PC-9 (cell line): ENCODE measurements at regions of chr11 and their contacts with region 1.

Region 1: DNA sequence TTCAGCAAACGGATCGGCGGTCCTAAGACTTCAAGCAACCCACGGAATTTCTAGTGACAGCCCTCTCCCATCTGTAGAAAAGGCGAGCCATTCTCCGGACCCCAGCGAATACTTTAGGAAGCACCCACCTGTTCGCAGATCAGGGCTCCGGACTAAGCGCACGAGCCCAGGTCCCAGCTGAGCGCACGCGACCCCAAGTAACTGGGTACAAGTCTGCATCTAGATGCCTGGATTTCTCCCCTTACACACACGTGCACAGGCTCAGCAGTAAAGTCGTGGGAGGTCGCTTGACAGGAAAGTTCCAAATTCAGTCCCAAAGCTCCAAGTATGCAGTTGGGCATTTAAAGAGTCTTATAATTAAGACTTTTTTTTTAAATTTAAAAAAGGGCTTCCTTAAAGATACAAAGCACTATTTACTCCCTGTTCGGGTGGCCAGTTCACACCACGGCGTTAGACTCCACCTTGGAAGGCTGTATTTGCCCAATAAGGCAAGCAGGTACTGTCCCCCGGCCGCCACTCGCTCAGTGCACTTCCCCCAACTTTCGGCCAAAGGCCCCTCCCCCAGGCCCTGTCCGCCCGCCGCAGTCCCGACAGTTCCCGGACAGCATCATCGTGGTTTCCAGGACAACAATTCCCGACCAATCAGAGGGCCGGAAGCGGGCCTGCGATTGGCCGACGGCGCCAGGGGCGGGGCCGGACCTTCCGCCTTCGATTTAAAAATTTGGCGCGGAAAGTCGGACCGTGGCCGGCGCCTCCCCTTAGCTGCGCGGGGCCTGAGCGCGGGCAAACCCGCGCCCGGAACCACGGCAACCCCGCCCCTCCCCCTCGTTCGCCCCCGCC is at the start of gene E2F8:
- DNase-seq: peak; percentile 94 to 99
- H3K4me3 ChIP-seq: peak within 1 kb of the TSS; percentile 87
- H3K27ac ChIP-seq: peak within 1 kb of the TSS; percentile 70
- H3K4me1 ChIP-seq: peaks cover 57% of the 10 kb centered on the region
- H3K27me3 ChIP-seq: no peaks in the 10 kb centered on the region
- CTCF ChIP-seq: no peak
- total RNA-seq, gene E2F8: 22.0 and 26.7 TPM in 2 replicates

Region 2: GRCh38 chr11:19079643-19080440 is 160.8 kb before region 1 on chr11:
- CTCF ChIA-PET with region 1: no interaction called
- POLR2A ChIA-PET with region 1: interaction called, 10 read pairs
- intact Hi-C with region 1: loop called (anchors 1 kb)
- DNase-seq: peak; percentile 86 to 100
- H3K4me3 ChIP-seq: peak overlapping the region; percentile 41
- H3K27ac ChIP-seq: peak overlapping the region; percentile 100
- H3K4me1 ChIP-seq: peaks cover 53% of the 10 kb centered on the region
- H3K27me3 ChIP-seq: no peaks in the 10 kb centered on the region
- CTCF ChIP-seq: 0 out of 2 replicates have a peak, but pooled peaks have one; percentile 27

Region 3: DNA sequence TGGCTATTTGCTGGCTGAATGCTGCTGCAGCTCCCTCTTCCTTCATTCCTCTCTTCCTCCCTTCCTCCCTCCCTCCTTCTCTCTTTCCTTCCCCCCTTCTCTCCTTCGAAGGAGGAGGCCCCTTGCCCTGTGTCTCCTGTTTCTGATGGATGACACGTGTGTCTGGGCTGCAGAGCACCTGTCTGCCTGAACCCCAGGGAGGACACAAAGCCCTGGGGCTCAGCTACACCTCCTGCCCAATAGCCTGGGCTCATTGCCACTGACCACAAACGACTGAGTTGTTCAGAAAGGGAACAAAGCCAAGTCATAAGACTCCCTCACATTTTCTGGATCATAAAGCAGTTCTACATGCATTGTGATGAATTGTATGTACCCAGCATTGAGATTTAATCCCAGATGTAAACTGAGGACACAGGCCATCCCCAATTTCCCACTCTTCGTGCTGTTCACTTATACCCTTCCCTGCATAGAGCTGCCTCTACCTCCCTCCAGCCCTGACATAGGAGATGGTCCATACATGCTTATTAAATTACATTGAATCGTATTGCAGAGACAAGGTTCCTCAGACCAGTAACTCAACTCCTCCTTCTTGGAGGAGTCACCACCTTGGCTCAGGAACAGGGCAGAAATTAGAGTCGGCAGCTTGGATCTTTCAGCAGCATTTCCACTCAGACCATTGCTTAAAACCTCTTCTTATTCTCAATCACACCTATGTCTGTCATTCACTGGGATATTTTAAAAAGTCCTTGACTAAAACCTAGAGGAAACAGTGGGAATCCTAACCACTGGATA is 40.0 kb before region 1 on chr11:
- CTCF ChIA-PET with region 1: no interaction called
- POLR2A ChIA-PET with region 1: no interaction called
- intact Hi-C with region 1: loop called (anchors 2 kb)
- DNase-seq: peak; percentile 76 to 84
- H3K4me3 ChIP-seq: no peak overlapping the region
- H3K27ac ChIP-seq: 0 out of 2 replicates have a peak overlapping the region, but pooled peaks have one; percentile 4
- H3K4me1 ChIP-seq: peaks cover 21% of the 10 kb centered on the region
- H3K27me3 ChIP-seq: no peaks in the 10 kb centered on the region
- CTCF ChIP-seq: no peak

Region 4: GRCh38 chr11:19259487-19260345 is 19.1 kb after region 1 on chr11:
- CTCF ChIA-PET with region 1: interaction called, 15 read pairs
- POLR2A ChIA-PET with region 1: interaction called, 4 read pairs
- intact Hi-C with region 1: no loop called
- DNase-seq: peak; percentile 49 to 73
- H3K4me3 ChIP-seq: no peak overlapping the region
- H3K27ac ChIP-seq: no peak overlapping the region
- H3K4me1 ChIP-seq: no peaks in the 10 kb centered on the region
- H3K27me3 ChIP-seq: no peaks in the 10 kb centered on the region
- CTCF ChIP-seq: peak; percentile 99

Region 5: DNA sequence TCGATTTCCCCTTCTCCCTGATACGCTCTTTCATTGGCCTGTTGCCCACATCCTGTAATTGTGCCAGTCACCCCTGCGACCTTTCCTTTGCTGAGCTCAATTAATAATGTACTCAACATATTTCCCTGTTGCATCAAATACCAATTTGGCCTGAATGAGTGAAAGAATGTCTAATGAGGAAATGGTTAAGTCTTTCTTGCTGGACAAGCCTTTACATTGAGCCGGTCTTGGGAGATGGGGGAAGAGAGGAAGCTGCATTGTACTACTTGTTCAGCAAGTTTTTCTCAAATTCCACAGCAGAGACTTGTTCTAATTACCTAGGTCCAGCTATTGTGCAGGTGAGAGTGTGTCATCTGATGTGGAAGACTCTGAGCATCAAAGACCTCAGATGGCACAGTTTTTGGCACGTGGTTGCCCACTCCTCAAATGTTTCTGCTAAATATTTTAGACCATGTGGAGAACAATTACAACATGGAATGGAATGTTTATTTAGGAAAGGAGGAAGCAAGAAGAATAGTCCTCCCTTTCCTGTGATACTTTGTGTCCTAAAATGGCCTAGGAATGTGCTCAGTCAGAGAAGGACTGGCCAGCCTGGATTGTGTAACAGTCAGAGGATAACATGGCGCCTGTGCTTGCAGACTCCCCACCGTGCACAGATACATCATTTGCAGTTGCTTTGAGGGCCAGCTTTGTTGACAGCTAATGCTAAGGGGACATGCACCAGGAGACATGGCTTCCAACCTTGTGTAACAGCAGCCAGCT is 129.6 kb after region 1 on chr11:
- CTCF ChIA-PET with region 1: no interaction called
- POLR2A ChIA-PET with region 1: no interaction called
- intact Hi-C with region 1: loop called (anchors 1 kb)
- DNase-seq: peak; percentile 56 to 100
- H3K4me3 ChIP-seq: no peak overlapping the region
- H3K27ac ChIP-seq: peak overlapping the region; percentile 81
- H3K4me1 ChIP-seq: peaks cover 82% of the 10 kb centered on the region
- H3K27me3 ChIP-seq: no peaks in the 10 kb centered on the region
- CTCF ChIP-seq: no peak

Region 6: DNA sequence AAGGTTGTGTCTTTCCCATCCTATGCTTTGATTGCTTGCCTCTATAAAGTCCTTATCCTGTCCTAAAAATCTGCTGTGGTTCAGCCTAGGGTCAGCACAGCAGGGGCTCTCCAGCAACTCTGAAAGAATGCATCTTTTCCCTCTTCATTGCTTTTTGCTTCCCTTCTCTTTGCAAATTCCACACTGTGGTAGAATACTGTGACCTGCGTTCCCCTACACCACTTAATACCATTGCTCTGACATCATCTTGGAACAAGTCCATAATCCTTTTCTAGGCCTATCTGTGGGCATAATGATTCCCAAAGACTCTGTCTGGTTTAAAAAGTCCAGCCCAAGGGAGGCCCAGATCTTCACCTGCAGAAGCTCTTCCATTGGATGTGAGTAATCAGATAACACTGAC is 649.7 kb after region 1 on chr11:
- CTCF ChIA-PET with region 1: no interaction called
- POLR2A ChIA-PET with region 1: no interaction called
- intact Hi-C with region 1: loop called (anchors 10 kb)
- DNase-seq: peak; percentile 46 to 68
- H3K4me3 ChIP-seq: no peak overlapping the region
- H3K27ac ChIP-seq: peak overlapping the region; percentile 11; the same call in 1 of the 2 replicates
- H3K4me1 ChIP-seq: peaks cover 34% of the 10 kb centered on the region
- H3K27me3 ChIP-seq: no peaks in the 10 kb centered on the region
- CTCF ChIP-seq: no peak